Naive thymus-derived CD4-positive, alpha-beta T cell (primary cell): ENCODE measurements at regions of chr10 and their contacts with region 1.

Region 1: GRCh38 chr10:72354478-72355213 is at the start of gene DNAJB12:
- DNase-seq: peak; percentile 90 to 96 (median 94)
- ATAC-seq: peak; percentile 94
- H3K4me3 ChIP-seq: peak within 1 kb of the TSS; percentile 98
- H3K4me3 Mint-ChIP-seq: peak within 1 kb of the TSS; percentile 93 to 99 (median 96)
- H3K27ac ChIP-seq: peak within 1 kb of the TSS; percentile 88
- H3K27ac Mint-ChIP-seq: peak within 1 kb of the TSS; percentile 93 to 100 (median 97)
- H3K4me1 ChIP-seq: peaks cover 8 to 13% of the 10 kb centered on the region in 2 donors
- H3K4me1 Mint-ChIP-seq: peaks cover 31 to 59% (median 46%) of the 10 kb centered on the region in 7 donors
- H3K27me3 ChIP-seq: no peaks in the 10 kb centered on the region
- H3K27me3 Mint-ChIP-seq: no peaks in the 10 kb centered on the region
- total RNA-seq, gene DNAJB12: 24.6 to 40.5 (median 36.2) TPM

Region 2: GRCh38 chr10:71319042-71319799 is 1035.4 kb before region 1 on chr10 and contains the start of gene SLC29A3:
- CTCF ChIA-PET with region 1: no interaction called
- POLR2A ChIA-PET with region 1: no interaction called
- intact Hi-C with region 1: loop called in 1 of 2 experiments (anchors 10 kb)
- DNase-seq: peak; percentile 45 to 85 (median 70)
- ATAC-seq: peak; percentile 91
- H3K4me3 ChIP-seq: peak within 1 kb of the TSS; percentile 81
- H3K4me3 Mint-ChIP-seq: peak within 1 kb of the TSS; percentile 85 to 97 (median 94)
- H3K27ac ChIP-seq: peak within 1 kb of the TSS; percentile 62
- H3K27ac Mint-ChIP-seq: peak within 1 kb of the TSS; percentile 71 to 94 (median 85)
- H3K4me1 ChIP-seq: peaks cover 5 to 10% of the 10 kb centered on the region in 2 donors
- H3K4me1 Mint-ChIP-seq: peaks cover 27 to 53% (median 40%) of the 10 kb centered on the region in 7 donors
- H3K27me3 ChIP-seq: no peaks in the 10 kb centered on the region
- H3K27me3 Mint-ChIP-seq: no peaks in the 10 kb centered on the region
- total RNA-seq, gene SLC29A3: 3.5 to 7.2 (median 5.1) TPM

Region 3: DNA sequence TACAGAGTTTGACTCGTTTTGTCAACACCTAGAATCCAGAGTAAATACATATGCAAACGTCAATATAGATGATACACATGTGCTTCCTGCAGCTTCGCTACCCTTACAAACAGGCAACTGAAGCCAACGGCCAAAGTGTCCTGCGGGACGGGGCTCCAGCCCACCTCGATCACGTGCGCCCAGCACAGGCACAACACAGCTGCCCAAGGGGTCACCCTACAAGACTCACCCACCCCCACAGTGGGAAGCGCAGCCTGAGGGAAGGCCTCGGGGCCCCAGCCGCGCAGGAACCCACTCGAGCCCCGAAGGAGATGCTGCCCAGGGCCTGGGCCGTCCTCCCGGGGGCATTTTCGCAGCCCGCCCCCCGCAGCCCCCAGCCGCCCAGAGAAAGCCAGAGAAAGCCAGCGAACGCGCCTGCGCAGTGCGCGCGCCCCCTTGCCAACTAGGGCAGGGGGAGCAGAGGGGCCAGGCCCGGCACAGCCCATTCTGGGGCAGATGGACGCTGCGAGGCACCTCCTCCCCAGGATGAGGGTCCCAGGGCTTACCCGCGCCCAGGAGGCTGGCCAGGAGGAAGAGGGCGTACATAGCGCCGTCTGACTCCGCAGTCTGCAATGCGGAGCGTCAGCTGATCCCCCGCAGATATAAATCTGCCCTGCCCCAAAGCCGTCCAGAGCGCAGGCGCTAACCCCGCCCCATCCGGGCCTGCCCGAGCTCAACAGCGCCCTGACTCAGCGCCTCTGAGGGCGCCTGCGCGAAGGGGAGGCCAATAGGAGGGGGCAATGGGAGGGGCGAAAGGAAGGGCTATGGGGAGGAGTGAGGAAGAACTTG is 503.8 kb before region 1 on chr10 and contains the start of gene PSAP:
- CTCF ChIA-PET with region 1: no interaction called
- POLR2A ChIA-PET with region 1: no interaction called
- intact Hi-C with region 1: loop called (anchors 2 to 5 kb)
- DNase-seq: peak; percentile 96 to 99 (median 97)
- ATAC-seq: peak; percentile 98
- H3K4me3 ChIP-seq: peak within 1 kb of the TSS; percentile 92
- H3K4me3 Mint-ChIP-seq: peak within 1 kb of the TSS; percentile 91 to 99 (median 96)
- H3K27ac ChIP-seq: peak within 1 kb of the TSS; percentile 79
- H3K27ac Mint-ChIP-seq: peak within 1 kb of the TSS; percentile 79 to 96 (median 86)
- H3K4me1 ChIP-seq: peaks cover 7 to 14% of the 10 kb centered on the region in 2 donors
- H3K4me1 Mint-ChIP-seq: peaks cover 34 to 51% (median 48%) of the 10 kb centered on the region in 7 donors
- H3K27me3 ChIP-seq: no peaks in the 10 kb centered on the region
- H3K27me3 Mint-ChIP-seq: no peaks in the 10 kb centered on the region
- total RNA-seq, gene PSAP: 153 to 1,163 (median 266) TPM

Region 4: GRCh38 chr10:72625608-72626443 is 271.2 kb after region 1 on chr10 and contains the start of gene MICU1:
- CTCF ChIA-PET with region 1: no interaction called
- POLR2A ChIA-PET with region 1: no interaction called
- intact Hi-C with region 1: loop called (anchors 1 kb)
- DNase-seq: peak; percentile 74 to 93 (median 90)
- ATAC-seq: peak; percentile 100
- H3K4me3 ChIP-seq: peak within 1 kb of the TSS; percentile 97
- H3K4me3 Mint-ChIP-seq: peak within 1 kb of the TSS; percentile 97 to 100 (median 100)
- H3K27ac ChIP-seq: peak within 1 kb of the TSS; percentile 76
- H3K27ac Mint-ChIP-seq: peak within 1 kb of the TSS; percentile 83 to 99 (median 97)
- H3K4me1 ChIP-seq: peaks cover 11 to 16% of the 10 kb centered on the region in 2 donors
- H3K4me1 Mint-ChIP-seq: peaks cover 11 to 28% (median 16%) of the 10 kb centered on the region in 7 donors
- H3K27me3 ChIP-seq: no peaks in the 10 kb centered on the region
- H3K27me3 Mint-ChIP-seq: peaks cover 0 to 8% (median 0%) of the 10 kb centered on the region in 5 donors
- total RNA-seq, gene MICU1: 20.8 to 39.6 (median 26.3) TPM

Region 5: GRCh38 chr10:73252445-73253224 is 898.0 kb after region 1 on chr10 and contains the start of gene MRPS16:
- CTCF ChIA-PET with region 1: no interaction called
- POLR2A ChIA-PET with region 1: no interaction called
- intact Hi-C with region 1: loop called in 1 of 2 experiments (anchors 1 kb)
- DNase-seq: peak; percentile 75 to 95 (median 93)
- ATAC-seq: peak; percentile 98
- H3K4me3 ChIP-seq: peak within 1 kb of the TSS; percentile 94
- H3K4me3 Mint-ChIP-seq: peak within 1 kb of the TSS; percentile 95 to 100 (median 99)
- H3K27ac ChIP-seq: peak within 1 kb of the TSS; percentile 92
- H3K27ac Mint-ChIP-seq: peak within 1 kb of the TSS; percentile 91 to 97 (median 94)
- H3K4me1 ChIP-seq: peaks cover 18 to 26% of the 10 kb centered on the region in 2 donors
- H3K4me1 Mint-ChIP-seq: peaks cover 19 to 50% (median 37%) of the 10 kb centered on the region in 7 donors
- H3K27me3 ChIP-seq: no peaks in the 10 kb centered on the region
- H3K27me3 Mint-ChIP-seq: peaks cover 0 to 2% (median 0%) of the 10 kb centered on the region in 5 donors
- total RNA-seq, gene MRPS16: 29.6 to 99.9 (median 47.6) TPM

Region 6: GRCh38 chr10:73413528-73414229 is 1059.0 kb after region 1 on chr10 and contains the start of gene ANXA7:
- CTCF ChIA-PET with region 1: no interaction called
- POLR2A ChIA-PET with region 1: no interaction called
- intact Hi-C with region 1: loop called in 1 of 2 experiments (anchors 10 kb)
- DNase-seq: peak; percentile 78 to 93 (median 85)
- ATAC-seq: peak; percentile 99
- H3K4me3 ChIP-seq: peak within 1 kb of the TSS; percentile 78
- H3K4me3 Mint-ChIP-seq: peak within 1 kb of the TSS; percentile 82 to 97 (median 94)
- H3K27ac ChIP-seq: peak within 1 kb of the TSS; percentile 98
- H3K27ac Mint-ChIP-seq: peak within 1 kb of the TSS; percentile 83 to 95 (median 90)
- H3K4me1 ChIP-seq: peaks cover 8 to 16% of the 10 kb centered on the region in 2 donors
- H3K4me1 Mint-ChIP-seq: peaks cover 39 to 60% (median 53%) of the 10 kb centered on the region in 7 donors
- H3K27me3 ChIP-seq: no peaks in the 10 kb centered on the region
- H3K27me3 Mint-ChIP-seq: peaks cover 0 to 4% (median 0%) of the 10 kb centered on the region in 5 donors
- total RNA-seq, gene ANXA7: 74.8 to 118 (median 97.3) TPM